HAP-1 (cell line): ENCODE measurements at regions of chr12 and their contacts with region 1.

Region 1: DNA sequence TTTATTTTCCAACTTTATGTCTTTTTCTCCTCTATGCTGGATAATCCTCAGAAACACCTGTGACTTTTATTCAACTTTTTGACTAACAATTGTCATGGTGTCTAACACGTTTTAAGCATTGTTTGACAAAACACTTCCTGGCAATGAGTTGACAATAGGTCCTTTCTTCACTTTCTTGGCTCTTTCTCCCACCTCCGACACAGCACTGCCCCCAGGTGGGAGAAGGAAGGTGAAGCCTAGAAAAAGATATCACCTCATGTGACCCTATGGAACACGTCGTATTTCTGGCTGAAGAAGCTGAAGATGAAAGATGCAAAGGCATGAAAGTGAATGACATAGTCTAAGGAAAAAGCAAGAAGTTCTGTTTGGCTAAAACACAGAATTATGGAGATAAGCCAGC is 430.0 kb downstream of the ETNK1 start:
- DNase-seq: peak; percentile 78 to 83
- H3K4me3 ChIP-seq: no peak overlapping the region
- H3K4me1 ChIP-seq: no peaks in the 10 kb centered on the region
- H3K27me3 ChIP-seq: no peaks in the 10 kb centered on the region

Region 2: GRCh38 chr12:22709292-22709691 is 345.7 kb before region 1 on chr12:
- in situ Hi-C with region 1: loop called (anchors 10 kb)
- DNase-seq: no peak
- H3K4me3 ChIP-seq: no peak overlapping the region
- H3K4me1 ChIP-seq: no peaks in the 10 kb centered on the region
- H3K27me3 ChIP-seq: no peaks in the 10 kb centered on the region

Region 3: GRCh38 chr12:22856178-22856577 is 198.8 kb before region 1 on chr12:
- in situ Hi-C with region 1: loop called (anchors 25 kb)
- DNase-seq: peak in 1 of 2 experiments; percentile 61
- H3K4me3 ChIP-seq: no peak overlapping the region
- H3K4me1 ChIP-seq: no peaks in the 10 kb centered on the region
- H3K27me3 ChIP-seq: peaks cover 2% of the 10 kb centered on the region; the same call in 1 of the 2 replicates